ENCODE measurements at regions of chr7 and their contacts with region 1.

Region 1: DNA sequence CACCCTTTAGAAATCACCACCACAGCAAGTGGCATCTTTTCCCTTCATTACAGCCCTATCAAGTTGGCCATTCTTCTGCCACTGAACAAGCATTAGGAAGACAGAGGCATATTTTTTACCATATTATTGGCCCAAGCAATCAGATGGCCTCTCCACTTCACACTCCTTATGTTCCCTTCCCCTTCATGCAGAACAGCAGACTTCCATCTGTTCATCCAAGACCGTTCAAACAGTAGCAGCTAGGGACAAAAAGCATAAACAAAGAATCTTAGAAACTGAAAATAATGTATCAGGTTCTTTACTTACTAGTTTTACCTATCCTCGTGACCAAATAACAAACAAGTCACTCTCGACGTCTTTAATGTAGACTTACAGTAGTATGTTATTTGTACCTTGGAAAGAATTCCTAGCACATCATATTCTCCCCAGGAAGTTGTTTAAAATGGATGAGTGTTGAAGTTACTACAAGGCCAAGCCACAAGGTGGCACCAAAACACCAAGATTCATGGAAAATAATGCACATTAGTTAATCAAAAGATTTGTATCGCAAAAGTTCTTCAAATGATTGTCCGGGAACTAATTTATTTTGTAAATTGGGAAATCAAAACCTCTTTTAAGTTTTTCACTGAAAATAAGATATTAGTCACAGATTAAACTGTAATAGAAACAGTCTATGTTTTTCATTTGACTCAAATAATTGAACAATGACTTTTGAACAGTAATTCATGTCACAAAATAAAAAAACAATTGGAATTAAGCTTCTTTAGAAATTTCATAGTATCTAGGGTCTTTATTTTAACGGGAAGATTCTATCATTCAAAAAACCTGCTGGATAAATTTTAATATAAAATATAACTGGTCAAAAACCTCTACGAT is 112.1 kb downstream of the VPS41 start:
- DNase-seq: peak; percentile 7 to 48 (median 36)
- H3K4me3 ChIP-seq: no peak overlapping the region
- H3K4me3 Mint-ChIP-seq: no peak overlapping the region
- H3K27ac ChIP-seq: no peak overlapping the region
- H3K27ac Mint-ChIP-seq: no peak overlapping the region
- H3K4me1 ChIP-seq: no peaks in the 10 kb centered on the region
- H3K4me1 Mint-ChIP-seq: no peaks in the 10 kb centered on the region
- H3K27me3 ChIP-seq: no peaks in the 10 kb centered on the region
- H3K27me3 Mint-ChIP-seq: peaks cover 0 to 1% (median 0%) of the 10 kb centered on the region in 3 donors
- CTCF ChIP-seq: peak; percentile 82

Region 2: GRCh38 chr7:39465055-39465929 is 668.4 kb after region 1 on chr7:
- intact Hi-C with region 1: loop called in 1 of 2 experiments (anchors 5 kb)
- DNase-seq: peak in 2 of 3 donors; percentile 10 to 15
- H3K4me3 ChIP-seq: no peak overlapping the region
- H3K4me3 Mint-ChIP-seq: peak overlapping the region in 1 of 2 donors; percentile 72
- H3K27ac ChIP-seq: no peak overlapping the region
- H3K27ac Mint-ChIP-seq: peak overlapping the region in 1 of 7 donors; percentile 43
- H3K4me1 ChIP-seq: no peaks in the 10 kb centered on the region
- H3K4me1 Mint-ChIP-seq: peaks cover 9% of the 10 kb centered on the region
- H3K27me3 ChIP-seq: no peaks in the 10 kb centered on the region
- H3K27me3 Mint-ChIP-seq: peaks cover 0 to 6% (median 4%) of the 10 kb centered on the region in 3 donors
- CTCF ChIP-seq: peak; percentile 64

Region 3: DNA sequence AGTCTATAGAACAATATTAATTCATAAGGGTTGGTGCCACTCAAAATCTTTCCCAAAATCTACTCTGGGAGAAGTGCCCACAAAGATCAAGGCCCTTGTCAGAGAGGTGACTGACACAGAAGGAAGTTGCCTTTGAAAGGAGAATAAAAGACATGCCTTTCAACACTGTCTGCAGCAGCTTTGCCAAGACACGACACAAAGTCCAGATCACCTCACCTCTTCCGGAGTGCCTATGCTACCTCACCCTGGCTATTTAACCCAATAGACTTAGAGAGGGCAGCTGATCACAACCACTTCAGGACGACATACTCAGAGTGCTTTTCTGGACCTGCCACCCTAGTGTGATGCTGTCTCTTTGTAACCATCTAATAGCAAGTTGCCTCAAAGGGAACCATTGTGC is 720.4 kb after region 1 on chr7:
- intact Hi-C with region 1: loop called (anchors 5 kb)
- DNase-seq: no peak
- H3K4me3 ChIP-seq: no peak overlapping the region
- H3K4me3 Mint-ChIP-seq: no peak overlapping the region
- H3K27ac ChIP-seq: no peak overlapping the region
- H3K27ac Mint-ChIP-seq: no peak overlapping the region
- H3K4me1 ChIP-seq: no peaks in the 10 kb centered on the region
- H3K4me1 Mint-ChIP-seq: peaks cover 7% of the 10 kb centered on the region
- H3K27me3 ChIP-seq: no peaks in the 10 kb centered on the region
- H3K27me3 Mint-ChIP-seq: peaks cover 0 to 2% (median 0%) of the 10 kb centered on the region in 3 donors
- CTCF ChIP-seq: no peak

Region 4: DNA sequence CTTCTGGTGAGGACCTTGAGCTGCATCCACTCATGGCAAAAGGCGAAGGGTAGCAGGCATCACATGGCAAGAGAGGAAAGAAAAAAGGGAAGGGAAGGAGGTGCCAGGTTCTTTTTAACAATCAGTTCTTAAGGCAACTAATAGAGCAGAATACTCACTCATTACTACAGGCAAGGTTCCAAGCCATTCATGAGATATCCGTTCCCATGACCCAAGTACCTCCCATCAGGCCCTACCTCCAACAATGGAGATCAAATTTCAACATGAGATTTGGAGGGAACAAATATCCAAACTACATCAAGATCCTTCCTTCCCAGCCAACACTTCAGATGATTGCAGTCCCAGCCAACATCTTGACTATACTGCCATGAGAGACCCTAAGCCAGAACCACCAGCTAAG is 730.4 kb after region 1 on chr7:
- intact Hi-C with region 1: loop called in 1 of 2 experiments (anchors 5 kb)
- DNase-seq: no peak
- H3K4me3 ChIP-seq: no peak overlapping the region
- H3K4me3 Mint-ChIP-seq: no peak overlapping the region
- H3K27ac ChIP-seq: no peak overlapping the region
- H3K27ac Mint-ChIP-seq: no peak overlapping the region
- H3K4me1 ChIP-seq: no peaks in the 10 kb centered on the region
- H3K4me1 Mint-ChIP-seq: peaks cover 2% of the 10 kb centered on the region
- H3K27me3 ChIP-seq: no peaks in the 10 kb centered on the region
- H3K27me3 Mint-ChIP-seq: peaks cover 4 to 5% (median 4%) of the 10 kb centered on the region in 3 donors
- CTCF ChIP-seq: no peak